Esophagus muscularis mucosa (tissue), 4 donors: ENCODE measurements at regions of chr2 and their contacts with region 1.

Region 1: DNA sequence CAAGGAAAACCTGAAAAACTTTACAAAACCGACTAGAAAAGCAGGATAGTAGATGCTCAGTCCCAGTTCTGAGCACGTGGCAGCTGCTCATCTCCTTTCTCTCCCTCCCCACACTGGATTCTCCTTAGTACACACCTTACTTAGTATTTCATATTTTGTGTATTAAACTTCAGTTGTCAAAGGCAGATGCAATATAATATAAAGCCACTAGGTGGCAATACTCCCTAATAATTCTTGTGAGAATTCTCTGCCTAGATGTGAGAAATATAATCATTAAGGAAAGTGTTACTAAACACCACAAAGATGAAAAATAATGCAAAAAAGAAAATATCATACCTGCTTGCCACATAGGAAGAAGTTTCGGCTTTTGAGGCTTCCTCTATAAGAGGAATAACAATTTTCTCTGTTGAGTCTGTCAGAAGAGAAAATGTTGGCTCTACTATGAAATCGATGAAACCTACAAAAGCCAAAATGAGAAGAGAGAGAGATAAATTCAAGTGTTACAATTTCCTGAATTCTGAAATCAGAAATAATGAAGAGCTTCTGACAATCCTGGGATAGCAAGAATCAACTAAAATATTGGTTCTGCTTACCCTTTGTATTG is 200.6 kb downstream of the PPP1R1C start:
- DNase-seq: no peak
- H3K4me3 ChIP-seq: no peak overlapping the region
- H3K27ac ChIP-seq: no peak overlapping the region
- H3K4me1 ChIP-seq: peaks cover 0 to 3% (median 0%) of the 10 kb centered on the region in 4 donors
- H3K27me3 ChIP-seq: no peaks in the 10 kb centered on the region
- CTCF ChIP-seq: peak; percentile 82 to 90 (median 88)
- EP300 ChIP-seq: no peak
- POLR2A ChIP-seq: no peak

Region 2: DNA sequence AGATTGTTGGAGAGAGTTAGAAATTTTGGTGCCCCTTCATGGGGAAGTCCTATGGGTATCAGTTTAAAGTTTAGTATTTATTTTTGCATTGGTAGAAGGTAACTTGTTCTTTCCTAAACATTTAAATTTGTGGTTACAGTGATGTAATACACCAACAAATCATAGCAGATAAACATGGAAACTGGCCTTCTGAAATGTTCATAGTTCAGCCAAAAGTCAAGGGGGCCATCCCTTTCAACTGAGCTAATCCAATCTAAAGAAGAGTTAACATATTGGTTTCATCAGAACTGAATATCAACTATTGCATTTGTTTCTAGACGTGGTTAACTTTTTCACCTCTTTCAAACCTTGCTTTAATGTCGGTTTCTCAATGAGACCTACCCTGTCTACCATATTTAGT is 154.3 kb before region 1 on chr2:
- intact Hi-C with region 1: no loop called
- DNase-seq: no peak
- H3K4me3 ChIP-seq: no peak overlapping the region
- H3K27ac ChIP-seq: no peak overlapping the region
- H3K4me1 ChIP-seq: no peaks in the 10 kb centered on the region
- H3K27me3 ChIP-seq: no peaks in the 10 kb centered on the region
- CTCF ChIP-seq: no peak
- EP300 ChIP-seq: no peak
- POLR2A ChIP-seq: no peak

Region 3: GRCh38 chr2:182650704-182651103 is 464.5 kb after region 1 on chr2:
- intact Hi-C with region 1: loop called (anchors 2 kb)
- DNase-seq: no peak
- H3K4me3 ChIP-seq: no peak overlapping the region
- H3K27ac ChIP-seq: no peak overlapping the region
- H3K4me1 ChIP-seq: peaks cover 0 to 6% (median 0%) of the 10 kb centered on the region in 4 donors
- H3K27me3 ChIP-seq: no peaks in the 10 kb centered on the region
- CTCF ChIP-seq: peak; percentile 42 to 56 (median 50)
- EP300 ChIP-seq: no peak
- POLR2A ChIP-seq: no peak